Natural killer cell (primary cell): ENCODE measurements at regions of chr1 and their contacts with region 1.

Region 1: GRCh38 chr1:182084487-182085316 is 23.2 kb upstream of the ZNF648 start:
- DNase-seq: peak; percentile 60 to 87
- ATAC-seq: peak; percentile 92 to 94 (median 93)
- H3K4me3 ChIP-seq: no peak overlapping the region
- H3K4me3 Mint-ChIP-seq: no peak overlapping the region
- H3K27ac ChIP-seq: no peak overlapping the region
- H3K27ac Mint-ChIP-seq: no peak overlapping the region
- H3K4me1 ChIP-seq: peaks cover 17% of the 10 kb centered on the region
- H3K4me1 Mint-ChIP-seq: peaks cover 5 to 16% of the 10 kb centered on the region in 2 donors
- H3K27me3 ChIP-seq: no peaks in the 10 kb centered on the region
- H3K27me3 Mint-ChIP-seq: no peaks in the 10 kb centered on the region
- CTCF ChIP-seq: peak; percentile 56

Region 2: GRCh38 chr1:181479137-181479745 is 605.5 kb before region 1 on chr1:
- intact Hi-C with region 1: loop called (anchors 1 kb)
- DNase-seq: peak in 1 of 2 donors; percentile 67
- ATAC-seq: no peak
- H3K4me3 ChIP-seq: no peak overlapping the region
- H3K4me3 Mint-ChIP-seq: no peak overlapping the region
- H3K27ac ChIP-seq: no peak overlapping the region
- H3K27ac Mint-ChIP-seq: no peak overlapping the region
- H3K4me1 ChIP-seq: no peaks in the 10 kb centered on the region
- H3K4me1 Mint-ChIP-seq: no peaks in the 10 kb centered on the region
- H3K27me3 ChIP-seq: peaks cover 6% of the 10 kb centered on the region
- H3K27me3 Mint-ChIP-seq: peaks cover 14 to 30% of the 10 kb centered on the region in 2 donors
- CTCF ChIP-seq: peak; percentile 10

Region 3: DNA sequence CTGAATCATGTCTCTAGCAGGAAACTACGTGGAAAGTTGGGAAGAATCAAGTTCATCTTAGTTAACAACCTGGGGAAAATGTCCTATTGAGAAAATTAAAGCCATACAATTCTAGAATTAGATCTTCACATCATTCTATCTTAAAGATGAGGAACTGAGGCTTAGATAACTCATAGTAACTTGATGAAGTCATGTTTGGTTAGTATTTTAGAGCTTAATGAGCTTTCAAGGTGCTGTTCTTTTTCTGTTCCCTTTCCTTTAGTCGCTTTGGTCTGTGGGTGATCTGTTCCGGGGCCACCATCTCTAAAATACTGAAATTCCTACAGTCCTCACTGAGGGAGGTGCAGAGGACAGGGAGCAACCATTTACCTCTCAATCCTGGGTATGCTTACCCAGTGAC is 311.2 kb after region 1 on chr1:
- intact Hi-C with region 1: loop called (anchors 1 kb)
- DNase-seq: no peak
- ATAC-seq: no peak
- H3K4me3 ChIP-seq: no peak overlapping the region
- H3K4me3 Mint-ChIP-seq: no peak overlapping the region
- H3K27ac ChIP-seq: no peak overlapping the region
- H3K27ac Mint-ChIP-seq: no peak overlapping the region
- H3K4me1 ChIP-seq: peaks cover 9% of the 10 kb centered on the region
- H3K4me1 Mint-ChIP-seq: peaks cover 17 to 21% of the 10 kb centered on the region in 2 donors
- H3K27me3 ChIP-seq: no peaks in the 10 kb centered on the region
- H3K27me3 Mint-ChIP-seq: peaks cover 0 to 3% of the 10 kb centered on the region in 2 donors
- CTCF ChIP-seq: no peak